H1 (cell line): ENCODE measurements at regions of chr6 and their contacts with region 1.

Region 1: DNA sequence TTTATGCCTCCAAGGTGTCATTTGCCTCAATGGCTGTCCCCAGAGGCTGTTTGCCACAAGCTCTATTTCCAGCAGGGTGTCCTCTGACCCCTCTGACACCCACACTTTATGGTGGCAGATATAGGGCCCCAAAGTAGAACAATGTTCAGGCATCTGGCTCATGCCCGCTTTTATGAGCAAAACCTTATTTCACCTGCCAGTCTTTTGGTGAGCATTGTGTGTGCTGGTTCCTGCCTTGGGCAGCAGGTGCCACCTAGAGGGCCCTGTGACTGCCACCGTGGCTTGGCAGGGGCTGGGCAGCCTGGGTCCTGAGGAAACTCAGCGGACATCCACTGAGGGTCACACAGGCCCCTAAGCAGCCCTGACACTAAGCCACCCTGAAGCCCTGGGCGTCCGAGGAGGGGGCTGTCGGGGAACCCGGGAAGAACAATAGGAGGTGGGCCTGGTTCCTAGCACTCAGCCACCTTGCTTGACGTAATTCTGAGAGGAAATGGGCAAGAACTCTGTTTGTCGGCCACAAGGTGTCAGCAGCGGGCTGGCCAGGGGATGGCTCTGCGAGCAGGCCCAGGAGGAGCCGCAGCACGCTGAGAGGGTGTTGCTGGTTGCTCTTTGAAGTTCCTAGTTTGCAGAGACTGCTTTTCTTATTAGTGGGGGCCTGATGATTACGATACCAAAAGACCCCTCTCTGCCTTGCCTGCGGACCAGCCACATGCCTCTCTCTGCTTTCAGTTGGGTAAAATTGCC is 148.9 kb downstream of the SCML4 start:
- DNase-seq: peak; percentile 73 to 92
- H3K4me3 ChIP-seq: peak overlapping the region in 3 of 4 experiments; percentile 16 to 47 (median 25); a peak in 4 of 8 replicates
- H3K27ac ChIP-seq: no peak overlapping the region
- H3K4me1 ChIP-seq: peaks cover 5 to 10% (median 7%) of the 10 kb centered on the region in 4 experiments
- H3K27me3 ChIP-seq: no peaks in the 10 kb centered on the region; a peak in 1 of 7 replicates
- CTCF ChIP-seq: peak; percentile 92 to 95 (median 93)
- EP300 ChIP-seq: no peak
- POLR2A ChIP-seq: no peak
- RAD21 ChIP-seq: peak; percentile 89 to 92

Region 2: GRCh38 chr6:107318100-107318736 is 356.9 kb before region 1 on chr6:
- CTCF ChIA-PET with region 1: interaction called, 12 read pairs
- POLR2A ChIA-PET with region 1: interaction called, 3 read pairs
- DNase-seq: peak; percentile 27 to 51
- H3K4me3 ChIP-seq: no peak overlapping the region
- H3K27ac ChIP-seq: no peak overlapping the region
- H3K4me1 ChIP-seq: no peaks in the 10 kb centered on the region; a peak in 1 of 7 replicates
- H3K27me3 ChIP-seq: no peaks in the 10 kb centered on the region
- CTCF ChIP-seq: peak; percentile 53 to 79 (median 78)
- EP300 ChIP-seq: no peak
- POLR2A ChIP-seq: no peak
- RAD21 ChIP-seq: peak; percentile 91 to 93

Region 3: DNA sequence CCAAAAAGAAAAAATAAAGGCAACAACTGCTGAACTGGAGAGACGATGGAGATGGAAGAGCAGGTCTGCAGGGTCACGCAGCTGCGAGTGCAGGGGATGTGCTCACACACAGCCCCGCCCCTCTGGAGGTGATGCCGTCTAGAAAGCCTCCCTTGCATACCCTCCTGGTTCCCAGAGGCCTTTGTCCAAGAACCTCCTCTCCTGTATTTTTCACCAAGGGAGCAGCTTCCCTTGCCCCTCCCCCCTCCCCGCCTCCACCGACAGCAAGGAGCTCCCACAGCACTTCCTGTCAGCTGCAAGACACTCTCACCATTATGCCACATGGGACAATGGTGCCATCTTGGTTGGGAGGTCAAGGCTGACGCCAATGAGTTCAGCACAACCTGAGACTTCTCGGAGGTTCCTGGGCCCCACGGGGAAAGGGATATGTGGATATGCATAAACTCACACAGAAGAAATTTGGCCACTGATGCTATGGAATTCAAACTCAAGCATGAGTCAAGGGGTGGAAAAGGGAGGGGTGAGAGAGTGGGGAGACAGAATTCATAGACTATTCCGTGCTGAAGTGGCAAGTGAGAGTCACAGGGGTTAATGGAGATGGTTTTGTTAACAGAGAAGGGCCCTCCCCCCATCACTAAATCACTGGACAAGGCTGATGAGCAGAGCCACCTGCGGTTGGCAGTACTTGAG is 16.0 kb after region 1 on chr6:
- CTCF ChIA-PET with region 1: interaction called, 20 read pairs
- POLR2A ChIA-PET with region 1: no interaction called
- DNase-seq: no peak
- H3K4me3 ChIP-seq: no peak overlapping the region
- H3K27ac ChIP-seq: no peak overlapping the region
- H3K4me1 ChIP-seq: peaks cover 0 to 4% (median 0%) of the 10 kb centered on the region in 4 experiments; a peak in 2 of 7 replicates
- H3K27me3 ChIP-seq: no peaks in the 10 kb centered on the region
- CTCF ChIP-seq: no peak
- EP300 ChIP-seq: no peak
- POLR2A ChIP-seq: no peak
- RAD21 ChIP-seq: no peak

Region 4: GRCh38 chr6:107704347-107705013 is 29.3 kb after region 1 on chr6:
- CTCF ChIA-PET with region 1: interaction called, 47 read pairs
- POLR2A ChIA-PET with region 1: no interaction called
- DNase-seq: no peak
- H3K4me3 ChIP-seq: no peak overlapping the region
- H3K27ac ChIP-seq: no peak overlapping the region
- H3K4me1 ChIP-seq: peaks cover 0 to 8% (median 5%) of the 10 kb centered on the region in 4 experiments; a peak in 5 of 7 replicates
- H3K27me3 ChIP-seq: no peaks in the 10 kb centered on the region
- CTCF ChIP-seq: peak in 2 of 3 experiments; percentile 69 to 70; a peak in 3 of 4 replicates
- EP300 ChIP-seq: no peak
- POLR2A ChIP-seq: no peak
- RAD21 ChIP-seq: peak; percentile 70 to 74

Region 5: DNA sequence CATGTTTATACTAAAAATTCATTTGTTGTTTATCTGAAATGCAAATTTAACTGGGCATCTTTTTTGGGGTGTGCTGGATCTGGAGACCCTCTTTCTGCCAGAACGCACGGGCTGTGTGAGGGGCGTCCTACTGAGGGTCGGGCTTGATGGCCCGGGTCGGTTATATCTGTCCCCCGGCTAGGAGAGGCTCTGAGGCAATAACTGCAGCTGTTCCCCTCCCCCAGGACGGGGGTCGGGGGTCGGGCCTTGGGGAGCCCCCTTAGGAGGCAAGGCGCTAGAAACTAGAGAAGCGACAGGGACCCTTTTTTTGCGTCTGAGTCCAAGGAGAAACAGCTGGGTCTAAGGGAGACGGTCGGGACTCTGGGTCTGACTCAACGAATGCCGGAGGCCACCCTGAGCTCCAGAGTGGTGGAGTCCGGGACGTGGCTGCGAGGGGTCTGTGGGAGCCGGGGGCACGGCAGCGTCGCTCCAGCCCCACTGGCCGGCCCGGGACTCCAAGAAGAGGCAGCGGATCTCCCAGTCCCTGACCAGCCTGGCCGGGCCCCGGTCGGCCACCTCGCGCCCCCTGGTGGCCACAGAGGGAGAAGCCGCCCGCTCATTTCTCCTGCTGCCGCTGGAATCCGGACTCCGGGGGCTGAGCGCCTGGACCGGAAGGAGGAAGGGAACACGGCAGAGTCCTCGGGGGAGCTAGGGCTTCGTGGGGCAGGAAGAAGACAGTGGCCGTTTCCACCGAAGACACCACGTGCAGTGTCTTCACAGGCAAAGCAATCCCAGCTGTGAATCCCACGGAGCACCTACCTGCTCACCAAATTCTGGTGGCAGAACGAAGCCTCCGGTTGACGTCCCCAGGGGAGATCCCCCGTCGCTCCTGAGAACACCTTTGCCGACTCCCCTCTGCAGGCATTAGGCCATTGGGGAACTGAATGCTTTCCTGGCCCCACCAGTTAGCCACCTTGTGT is 173.0 kb after region 1 on chr6:
- CTCF ChIA-PET with region 1: interaction called, 21 read pairs
- POLR2A ChIA-PET with region 1: no interaction called
- DNase-seq: peak; percentile 50 to 98
- H3K4me3 ChIP-seq: peak overlapping the region; percentile 53 to 80 (median 70)
- H3K27ac ChIP-seq: no peak overlapping the region
- H3K4me1 ChIP-seq: peaks cover 0 to 5% (median 0%) of the 10 kb centered on the region in 4 experiments; a peak in 2 of 7 replicates
- H3K27me3 ChIP-seq: peaks cover 0 to 7% (median 4%) of the 10 kb centered on the region in 4 experiments; a peak in 5 of 7 replicates
- CTCF ChIP-seq: peak; percentile 70 to 94 (median 93)
- EP300 ChIP-seq: no peak
- POLR2A ChIP-seq: peak in 1 of 2 experiments; percentile 51; a peak in 1 of 3 replicates
- RAD21 ChIP-seq: peak; percentile 84 to 90